ENCODE measurements at regions of chr16 and their contacts with region 1.

Region 1: DNA sequence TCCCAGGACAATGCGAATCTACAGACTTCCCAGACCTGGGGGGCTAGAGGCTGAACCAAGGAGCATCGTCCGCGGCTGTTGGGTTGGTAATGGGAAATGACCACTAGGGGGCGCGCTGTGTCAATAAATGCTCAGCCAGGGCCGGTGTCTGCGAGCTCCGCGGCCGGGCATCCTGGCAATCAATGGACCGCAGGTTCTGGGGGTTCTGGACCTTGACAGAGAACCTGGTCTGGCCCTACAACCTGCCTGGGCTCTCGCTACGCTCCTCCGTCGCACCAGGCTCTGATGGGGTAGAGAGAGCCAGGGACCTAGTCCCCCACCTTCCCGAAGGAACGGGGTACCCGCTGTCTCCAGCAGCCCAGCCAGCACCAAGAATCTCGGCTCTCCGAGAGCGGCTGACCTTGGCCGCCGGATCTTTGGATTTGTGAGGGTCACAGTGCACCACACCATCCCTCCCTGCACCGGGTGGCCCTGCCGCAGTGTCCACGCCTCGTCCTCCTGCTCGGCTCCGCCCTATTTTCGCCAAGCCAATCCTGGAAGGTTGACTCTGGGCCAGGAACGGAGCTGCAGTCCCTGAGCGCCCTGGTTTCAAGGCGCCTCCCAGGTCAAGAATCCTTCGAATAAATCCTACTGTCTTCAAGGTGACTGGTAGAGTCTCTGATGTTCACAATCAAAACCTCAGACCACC is 20.4 kb upstream of the BEAN1 start:
- DNase-seq: peak; percentile 94
- ATAC-seq: peak; percentile 82
- H3K4me3 Mint-ChIP-seq: peak overlapping the region; percentile 72
- H3K27ac Mint-ChIP-seq: peak overlapping the region; percentile 12
- H3K4me1 Mint-ChIP-seq: peaks cover 24% of the 10 kb centered on the region
- H3K27me3 Mint-ChIP-seq: peaks cover 4% of the 10 kb centered on the region

Region 2: GRCh38 chr16:66483689-66484481 is 77.2 kb after region 1 on chr16:
- CTCF ChIA-PET with region 1: interaction called, 83 read pairs
- POLR2A ChIA-PET with region 1: no interaction called
- intact Hi-C with region 1: loop called (anchors 1 kb)
- DNase-seq: peak; percentile 89
- ATAC-seq: peak; percentile 77
- H3K4me3 Mint-ChIP-seq: no peak overlapping the region
- H3K27ac Mint-ChIP-seq: peak overlapping the region; percentile 55
- H3K4me1 Mint-ChIP-seq: peaks cover 18% of the 10 kb centered on the region
- H3K27me3 Mint-ChIP-seq: no peaks in the 10 kb centered on the region

Region 3: GRCh38 chr16:66539623-66540469 is 133.2 kb after region 1 on chr16:
- CTCF ChIA-PET with region 1: no interaction called
- POLR2A ChIA-PET with region 1: no interaction called
- intact Hi-C with region 1: no loop called
- DNase-seq: no peak
- ATAC-seq: no peak
- H3K4me3 Mint-ChIP-seq: no peak overlapping the region
- H3K27ac Mint-ChIP-seq: peak overlapping the region; percentile 27
- H3K4me1 Mint-ChIP-seq: peaks cover 19% of the 10 kb centered on the region
- H3K27me3 Mint-ChIP-seq: no peaks in the 10 kb centered on the region

Region 4: DNA sequence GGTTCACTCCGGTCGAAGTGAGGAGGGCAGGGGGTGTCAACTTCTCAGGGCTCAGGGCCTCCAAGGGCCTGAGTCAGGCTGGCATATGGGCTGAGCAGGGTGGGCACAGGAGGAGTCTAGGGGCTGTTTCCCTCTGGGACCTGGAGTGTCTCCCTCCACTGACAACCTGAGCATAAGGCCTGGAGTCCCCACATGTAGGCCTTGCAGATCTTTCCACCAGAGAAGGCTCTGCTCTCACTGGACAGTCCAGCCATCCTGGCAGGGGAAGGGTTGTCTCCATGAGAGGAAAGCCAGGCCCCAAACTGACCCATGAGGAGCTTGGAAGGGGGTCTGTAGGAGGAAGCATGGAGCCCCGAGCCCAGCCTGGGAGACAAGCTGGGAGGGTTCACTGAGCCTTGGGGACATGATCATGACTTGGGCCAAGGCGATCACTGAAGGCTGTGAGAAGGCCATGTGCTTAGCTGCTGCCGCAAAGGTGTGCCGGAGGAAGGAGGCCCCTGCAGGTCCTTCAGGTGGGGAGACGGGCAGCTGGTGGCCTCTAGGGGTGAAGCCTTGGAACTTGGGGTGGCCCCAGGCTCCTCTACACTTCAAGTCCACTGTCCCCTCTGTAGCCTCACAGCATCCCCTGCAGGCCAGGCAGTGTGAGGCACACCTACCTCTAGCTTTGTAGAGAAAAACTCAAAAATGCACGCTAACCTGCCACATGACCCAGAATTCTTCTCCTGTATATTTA is 182.5 kb after region 1 on chr16:
- CTCF ChIA-PET with region 1: interaction called, 23 read pairs
- POLR2A ChIA-PET with region 1: no interaction called
- intact Hi-C with region 1: loop called (anchors 1 kb)
- DNase-seq: peak; percentile 86
- ATAC-seq: peak; percentile 99
- H3K4me3 Mint-ChIP-seq: peak overlapping the region; percentile 63
- H3K27ac Mint-ChIP-seq: peak overlapping the region; percentile 65
- H3K4me1 Mint-ChIP-seq: peaks cover 35% of the 10 kb centered on the region
- H3K27me3 Mint-ChIP-seq: no peaks in the 10 kb centered on the region

Region 5: GRCh38 chr16:66696669-66697630 is 290.3 kb after region 1 on chr16 and contains the start of gene CMTM4:
- CTCF ChIA-PET with region 1: interaction called, 3 read pairs
- POLR2A ChIA-PET with region 1: no interaction called
- intact Hi-C with region 1: loop called in 1 of 2 experiments (anchors 1 kb)
- DNase-seq: peak; percentile 87
- ATAC-seq: peak; percentile 96
- H3K4me3 Mint-ChIP-seq: peak within 1 kb of the TSS; percentile 73
- H3K27ac Mint-ChIP-seq: no peak within 1 kb of the TSS
- H3K4me1 Mint-ChIP-seq: peaks cover 12% of the 10 kb centered on the region
- H3K27me3 Mint-ChIP-seq: peaks cover 10% of the 10 kb centered on the region
- total RNA-seq, gene CMTM4: 3.3 to 4.5 TPM

Region 6: GRCh38 chr16:66740010-66740409 is 333.3 kb after region 1 on chr16:
- CTCF ChIA-PET with region 1: interaction called, 11 read pairs
- POLR2A ChIA-PET with region 1: no interaction called
- intact Hi-C with region 1: loop called (anchors 1 to 2 kb)
- DNase-seq: peak; percentile 48
- ATAC-seq: peak; percentile 72
- H3K4me3 Mint-ChIP-seq: no peak overlapping the region
- H3K27ac Mint-ChIP-seq: no peak overlapping the region
- H3K4me1 Mint-ChIP-seq: peaks cover 16% of the 10 kb centered on the region
- H3K27me3 Mint-ChIP-seq: no peaks in the 10 kb centered on the region

Region 7: DNA sequence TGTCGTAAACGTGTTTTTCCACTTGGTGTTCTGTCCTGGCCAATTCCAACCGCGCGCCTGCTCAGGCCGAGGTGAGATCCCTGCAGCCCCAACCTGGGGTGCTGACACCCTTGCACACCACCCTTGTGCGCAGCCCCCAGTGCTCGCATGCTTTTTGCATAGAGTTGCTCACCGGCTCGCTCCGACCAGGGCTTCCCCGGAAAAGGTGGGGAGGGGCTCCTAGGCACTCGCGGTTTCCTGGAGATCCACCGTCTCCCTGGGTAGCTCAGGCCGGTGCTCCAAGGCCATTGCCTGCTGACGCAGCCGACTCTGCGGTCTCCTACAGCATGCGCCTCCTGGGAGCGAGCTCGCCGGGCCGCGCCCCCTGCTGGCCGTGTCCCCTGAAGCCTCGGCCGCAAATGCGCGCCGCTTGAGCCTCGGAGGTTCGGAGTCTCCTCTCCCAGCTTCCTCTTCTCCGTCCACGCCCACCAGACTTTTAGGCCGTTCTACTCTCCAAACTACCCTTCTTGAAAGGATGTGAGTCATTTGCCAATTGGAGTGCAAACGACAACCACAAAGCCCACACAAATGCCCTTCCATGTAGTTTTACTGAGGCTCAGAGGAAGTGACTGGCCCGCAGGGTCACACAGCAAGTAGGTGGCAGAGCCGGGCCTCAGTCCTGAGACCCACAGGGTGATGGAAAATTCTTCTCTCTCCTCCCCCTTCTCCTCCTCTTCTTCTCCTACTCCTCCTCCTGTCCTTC is 466.4 kb after region 1 on chr16:
- CTCF ChIA-PET with region 1: interaction called, 5 read pairs
- POLR2A ChIA-PET with region 1: no interaction called
- intact Hi-C with region 1: loop called (anchors 1 to 5 kb)
- DNase-seq: peak; percentile 95
- ATAC-seq: peak; percentile 77
- H3K4me3 Mint-ChIP-seq: peak overlapping the region; percentile 65
- H3K27ac Mint-ChIP-seq: peak overlapping the region; percentile 72
- H3K4me1 Mint-ChIP-seq: peaks cover 48% of the 10 kb centered on the region
- H3K27me3 Mint-ChIP-seq: no peaks in the 10 kb centered on the region